B cell (primary cell): ENCODE measurements at regions of chr4 and their contacts with region 1.

Region 1: DNA sequence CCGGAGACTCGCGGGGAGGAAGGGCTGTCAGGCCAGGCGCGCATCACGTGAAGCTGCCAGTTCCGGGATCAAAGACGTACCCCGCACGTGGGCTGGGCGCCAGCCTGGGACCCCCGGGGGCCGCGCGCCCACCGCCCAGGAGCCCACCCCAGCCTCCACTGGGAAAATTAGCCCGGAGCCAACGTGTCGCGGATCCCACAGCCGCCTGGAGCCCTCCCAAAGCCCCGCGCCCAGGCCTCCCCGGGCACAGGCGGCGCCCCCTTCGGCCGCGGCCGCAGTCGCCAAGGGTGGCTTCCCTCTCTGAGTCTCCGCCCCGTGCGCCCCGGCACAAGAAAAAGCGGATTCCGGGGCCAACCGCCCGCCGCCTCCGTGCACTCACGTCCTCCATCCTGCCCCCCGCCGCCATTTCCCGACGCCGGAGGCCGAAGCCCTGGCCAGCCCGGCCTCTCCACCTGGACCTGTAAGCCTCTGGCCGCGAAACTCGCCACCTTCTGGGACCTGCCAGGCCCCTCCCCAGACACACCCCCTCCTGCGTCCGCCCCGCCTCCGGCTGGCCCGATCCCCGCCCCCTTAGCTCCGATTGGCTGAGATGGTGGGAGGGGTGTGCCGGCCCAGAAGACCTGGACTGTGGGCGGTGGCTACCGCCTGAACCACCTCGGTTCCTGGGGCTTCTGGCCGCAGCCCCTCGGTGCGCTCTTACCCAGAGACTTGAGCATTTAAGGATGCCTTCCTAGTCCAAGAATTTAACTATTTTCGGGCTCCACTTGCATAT is at the start of gene TMEM192:
- DNase-seq: peak; percentile 95
- ATAC-seq: peak; percentile 97
- H3K4me3 ChIP-seq: peak within 1 kb of the TSS; percentile 89 to 93 (median 91)
- H3K4me3 Mint-ChIP-seq: peak within 1 kb of the TSS; percentile 98
- H3K27ac ChIP-seq: peak within 1 kb of the TSS; percentile 75 to 92
- H3K27ac Mint-ChIP-seq: peak within 1 kb of the TSS; percentile 97
- H3K4me1 ChIP-seq: peaks cover 9 to 11% of the 10 kb centered on the region in 2 donors
- H3K4me1 Mint-ChIP-seq: peaks cover 15% of the 10 kb centered on the region
- H3K27me3 ChIP-seq: no peaks in the 10 kb centered on the region
- H3K27me3 Mint-ChIP-seq: peaks cover 7% of the 10 kb centered on the region
- CTCF ChIP-seq: no peak
- total RNA-seq, gene TMEM192: 13.3 and 14.3 TPM in 2 replicates

Region 2: DNA sequence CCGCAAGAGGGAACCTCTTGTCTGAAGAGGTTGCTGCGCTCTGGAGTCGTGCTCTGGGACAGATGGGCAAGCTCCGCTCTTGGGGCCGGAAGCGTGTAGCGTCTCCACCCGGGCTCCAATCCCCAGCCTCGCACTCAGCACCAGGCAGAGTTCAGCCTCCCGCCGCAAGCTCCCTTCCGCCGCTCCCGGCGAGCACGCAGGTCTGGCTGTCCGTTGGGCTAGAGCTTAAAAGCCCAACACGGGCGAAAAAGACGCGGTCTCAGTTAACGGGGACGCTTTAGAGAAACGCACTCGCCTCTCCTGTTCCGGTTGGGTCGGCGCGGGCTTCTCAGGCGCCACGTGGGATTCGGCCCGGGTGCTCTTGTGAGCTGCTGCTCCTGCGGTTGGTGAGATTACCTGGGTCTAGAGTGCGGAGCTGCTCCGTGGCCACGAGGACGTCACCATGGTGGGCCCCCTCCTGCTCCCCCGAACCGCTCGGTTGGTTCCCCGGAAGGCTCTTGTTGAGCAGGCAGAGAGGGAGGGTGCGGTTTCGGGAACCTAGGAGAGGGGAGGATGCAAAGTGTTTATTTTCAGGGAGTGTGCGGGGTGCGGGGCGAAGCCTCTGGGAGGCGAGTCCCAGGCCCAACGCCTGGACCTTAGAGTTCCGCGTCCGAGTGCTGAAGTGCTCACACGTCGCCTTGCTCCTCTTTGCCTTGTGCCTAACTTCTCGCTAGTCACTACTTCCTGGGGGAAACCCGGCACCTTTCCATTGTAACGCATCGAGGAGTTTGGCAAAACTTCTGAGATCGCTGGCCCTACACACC is 1618.0 kb before region 1 on chr4 and contains the start of gene TMA16:
- CTCF ChIA-PET with region 1: no interaction called
- POLR2A ChIA-PET with region 1: no interaction called
- intact Hi-C with region 1: loop called (anchors 5 kb)
- DNase-seq: peak; percentile 90
- ATAC-seq: peak; percentile 67
- H3K4me3 ChIP-seq: peak within 1 kb of the TSS; percentile 68 to 99 (median 96)
- H3K4me3 Mint-ChIP-seq: peak within 1 kb of the TSS; percentile 99
- H3K27ac ChIP-seq: peak within 1 kb of the TSS; percentile 80 to 81
- H3K27ac Mint-ChIP-seq: peak within 1 kb of the TSS; percentile 100
- H3K4me1 ChIP-seq: peaks cover 21 to 28% of the 10 kb centered on the region in 2 donors
- H3K4me1 Mint-ChIP-seq: peaks cover 42% of the 10 kb centered on the region
- H3K27me3 ChIP-seq: no peaks in the 10 kb centered on the region
- H3K27me3 Mint-ChIP-seq: no peaks in the 10 kb centered on the region
- CTCF ChIP-seq: no peak
- total RNA-seq, gene TMA16: 40.5 and 49.0 TPM in 2 replicates

Region 3: GRCh38 chr4:165131247-165131832 is 18.8 kb after region 1 on chr4:
- CTCF ChIA-PET with region 1: interaction called, 11 read pairs
- POLR2A ChIA-PET with region 1: no interaction called
- intact Hi-C with region 1: loop called (anchors 1 kb)
- DNase-seq: peak; percentile 82
- ATAC-seq: peak; percentile 84
- H3K4me3 ChIP-seq: no peak overlapping the region
- H3K4me3 Mint-ChIP-seq: no peak overlapping the region
- H3K27ac ChIP-seq: no peak overlapping the region
- H3K27ac Mint-ChIP-seq: no peak overlapping the region
- H3K4me1 ChIP-seq: peaks cover 40 to 41% of the 10 kb centered on the region in 2 donors
- H3K4me1 Mint-ChIP-seq: peaks cover 36% of the 10 kb centered on the region
- H3K27me3 ChIP-seq: no peaks in the 10 kb centered on the region
- H3K27me3 Mint-ChIP-seq: no peaks in the 10 kb centered on the region
- CTCF ChIP-seq: peak; percentile 92

Region 4: DNA sequence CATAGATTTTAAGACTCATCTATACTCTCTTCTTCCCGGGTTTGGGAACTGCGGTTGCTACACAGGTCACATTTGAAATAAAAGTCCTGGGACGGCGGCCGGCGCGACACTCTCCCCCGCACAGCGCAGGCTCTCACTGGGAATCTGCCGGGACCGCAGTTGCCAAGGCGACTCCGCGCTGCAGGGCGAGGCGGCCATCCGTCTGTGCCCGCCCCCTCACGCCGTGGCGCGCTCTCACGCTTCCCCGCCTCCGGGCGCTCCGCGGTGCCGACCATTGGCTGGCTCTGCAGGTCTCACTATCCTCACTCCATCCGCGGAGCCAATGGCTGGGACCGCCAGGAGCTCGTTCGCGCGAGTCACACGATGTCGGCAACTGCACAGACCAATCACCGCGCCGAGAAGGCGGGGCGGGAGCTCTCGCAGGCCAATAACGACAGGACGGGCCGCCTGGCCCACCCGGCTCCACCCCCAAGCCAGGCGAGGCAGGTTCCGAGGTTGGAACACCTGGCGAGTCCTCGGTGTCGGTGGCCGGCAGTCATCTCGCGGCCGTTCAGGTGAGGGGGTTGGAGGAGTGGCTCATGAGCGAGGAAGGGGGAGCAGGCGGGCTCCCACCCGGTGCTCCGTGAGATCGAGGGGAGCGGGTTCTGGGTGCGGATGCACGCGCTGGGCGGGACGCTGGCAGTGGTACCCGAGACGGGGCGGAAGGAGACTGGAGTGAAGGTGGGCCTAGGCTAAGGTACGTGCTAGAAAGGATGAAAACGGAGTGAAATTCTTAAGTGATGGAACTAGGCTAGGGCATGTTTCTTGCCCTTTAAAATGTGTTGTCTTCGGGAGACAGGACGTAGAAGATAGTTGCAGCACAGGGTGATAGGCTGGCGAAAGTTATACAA is 214.9 kb after region 1 on chr4 and contains the start of gene MSMO1:
- CTCF ChIA-PET with region 1: interaction called, 14 read pairs
- POLR2A ChIA-PET with region 1: interaction called, 9 read pairs
- intact Hi-C with region 1: loop called (anchors 1 kb)
- DNase-seq: peak; percentile 99
- ATAC-seq: peak; percentile 96
- H3K4me3 ChIP-seq: peak within 1 kb of the TSS; percentile 66 to 92 (median 86)
- H3K4me3 Mint-ChIP-seq: no peak within 1 kb of the TSS
- H3K27ac ChIP-seq: peak within 1 kb of the TSS; percentile 59 to 93
- H3K27ac Mint-ChIP-seq: no peak within 1 kb of the TSS
- H3K4me1 ChIP-seq: peaks cover 22 to 26% of the 10 kb centered on the region in 2 donors
- H3K4me1 Mint-ChIP-seq: peaks cover 30% of the 10 kb centered on the region
- H3K27me3 ChIP-seq: no peaks in the 10 kb centered on the region
- H3K27me3 Mint-ChIP-seq: no peaks in the 10 kb centered on the region
- CTCF ChIP-seq: no peak
- total RNA-seq, gene MSMO1: 30.8 and 34.6 TPM in 2 replicates

Region 5: GRCh38 chr4:165464813-165465381 is 352.3 kb after region 1 on chr4:
- CTCF ChIA-PET with region 1: interaction called, 4 read pairs
- POLR2A ChIA-PET with region 1: no interaction called
- intact Hi-C with region 1: loop called (anchors 5 kb)
- DNase-seq: peak; percentile 60
- ATAC-seq: peak; percentile 45
- H3K4me3 ChIP-seq: no peak overlapping the region
- H3K4me3 Mint-ChIP-seq: no peak overlapping the region
- H3K27ac ChIP-seq: no peak overlapping the region
- H3K27ac Mint-ChIP-seq: no peak overlapping the region
- H3K4me1 ChIP-seq: no peaks in the 10 kb centered on the region
- H3K4me1 Mint-ChIP-seq: no peaks in the 10 kb centered on the region
- H3K27me3 ChIP-seq: peaks cover 0 to 3% (median 0%) of the 10 kb centered on the region in 4 experiments
- H3K27me3 Mint-ChIP-seq: peaks cover 8% of the 10 kb centered on the region
- CTCF ChIP-seq: peak; percentile 92